Common myeloid progenitor, CD34-positive (primary cell): ENCODE measurements at regions of chr4 and their contacts with region 1.

Region 1: GRCh38 chr4:42690537-42690936 is 33.6 kb upstream of the ATP8A1 start:
- DNase-seq: no peak
- H3K4me3 ChIP-seq: no peak overlapping the region
- H3K27ac ChIP-seq: no peak overlapping the region
- H3K4me1 ChIP-seq: no peaks in the 10 kb centered on the region
- H3K27me3 ChIP-seq: no peaks in the 10 kb centered on the region

Region 2: DNA sequence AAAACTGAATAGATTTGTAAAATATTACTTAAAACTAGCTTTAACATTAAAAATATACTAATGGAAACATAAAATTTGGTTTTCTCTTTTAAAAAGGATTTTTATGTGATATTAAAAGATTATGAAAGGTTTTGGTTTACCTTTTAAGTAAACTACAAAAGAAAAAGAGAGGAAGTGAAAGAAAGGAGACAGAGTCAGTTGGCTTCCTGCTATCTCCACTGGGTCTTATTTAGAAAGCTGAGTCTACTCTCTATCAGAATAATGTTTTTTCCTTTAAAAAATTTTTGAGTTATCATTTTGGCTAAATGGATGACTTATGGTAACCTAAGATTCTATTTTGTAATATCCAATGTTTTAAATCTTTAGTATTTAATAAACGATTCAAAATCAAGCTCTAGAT is 12.0 kb before region 1 on chr4:
- CTCF ChIA-PET with region 1: interaction called, 10 read pairs
- POLR2A ChIA-PET with region 1: no interaction called
- DNase-seq: no peak
- H3K4me3 ChIP-seq: no peak overlapping the region
- H3K27ac ChIP-seq: no peak overlapping the region
- H3K4me1 ChIP-seq: peaks cover 0 to 20% (median 4%) of the 10 kb centered on the region in 4 experiments
- H3K27me3 ChIP-seq: no peaks in the 10 kb centered on the region